Posterior vena cava (tissue), 2 donors: ENCODE measurements at regions of chr6 and their contacts with region 1.

Region 1: DNA sequence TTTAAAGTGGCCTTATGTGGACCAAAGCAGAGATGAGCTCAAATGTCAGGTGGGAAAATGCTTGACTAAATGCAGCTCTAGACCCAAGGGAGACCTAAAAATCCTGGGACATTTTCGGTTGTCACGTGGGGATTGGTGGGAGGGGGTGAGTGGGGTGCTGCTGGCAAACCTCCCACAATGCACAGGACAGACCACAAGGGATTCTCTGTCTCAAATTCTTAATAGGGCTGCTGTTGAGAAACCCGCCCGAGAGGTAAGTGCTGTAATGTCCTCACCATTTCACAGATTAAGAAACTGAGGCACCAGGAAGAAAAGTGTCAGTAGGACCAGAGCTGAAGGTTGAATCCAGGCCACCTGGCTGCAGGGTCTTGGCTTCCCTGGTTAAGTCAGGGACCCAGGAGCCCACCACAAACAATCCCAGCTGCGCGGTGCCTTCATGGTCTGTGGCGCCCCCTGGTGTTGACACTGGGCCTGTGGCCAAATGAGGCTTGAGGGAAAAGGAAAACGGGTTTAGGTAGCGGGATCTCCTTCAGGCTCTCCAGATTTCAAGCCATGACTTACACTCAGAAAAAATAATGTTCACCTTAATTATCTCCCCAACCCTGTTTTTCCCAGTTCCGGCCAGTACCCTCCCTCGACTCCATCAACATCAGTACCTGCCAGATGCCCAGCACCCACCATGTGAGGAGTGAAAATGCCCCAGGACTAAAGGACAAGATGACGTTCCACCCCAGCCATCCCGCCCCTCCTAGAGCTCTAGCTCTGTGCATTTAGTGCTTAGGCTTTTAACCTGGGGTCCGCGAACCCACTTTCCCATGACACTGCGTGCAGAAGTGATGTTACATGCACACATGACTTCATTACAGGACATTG is 7.2 kb downstream of the HLA-G start:
- DNase-seq: peak; percentile 44

Region 2: GRCh38 chr6:28929887-28930620 is 904.7 kb before region 1 on chr6:
- intact Hi-C with region 1: loop called in 1 of 2 experiments (anchors 5 kb)
- DNase-seq: no peak

Region 3: DNA sequence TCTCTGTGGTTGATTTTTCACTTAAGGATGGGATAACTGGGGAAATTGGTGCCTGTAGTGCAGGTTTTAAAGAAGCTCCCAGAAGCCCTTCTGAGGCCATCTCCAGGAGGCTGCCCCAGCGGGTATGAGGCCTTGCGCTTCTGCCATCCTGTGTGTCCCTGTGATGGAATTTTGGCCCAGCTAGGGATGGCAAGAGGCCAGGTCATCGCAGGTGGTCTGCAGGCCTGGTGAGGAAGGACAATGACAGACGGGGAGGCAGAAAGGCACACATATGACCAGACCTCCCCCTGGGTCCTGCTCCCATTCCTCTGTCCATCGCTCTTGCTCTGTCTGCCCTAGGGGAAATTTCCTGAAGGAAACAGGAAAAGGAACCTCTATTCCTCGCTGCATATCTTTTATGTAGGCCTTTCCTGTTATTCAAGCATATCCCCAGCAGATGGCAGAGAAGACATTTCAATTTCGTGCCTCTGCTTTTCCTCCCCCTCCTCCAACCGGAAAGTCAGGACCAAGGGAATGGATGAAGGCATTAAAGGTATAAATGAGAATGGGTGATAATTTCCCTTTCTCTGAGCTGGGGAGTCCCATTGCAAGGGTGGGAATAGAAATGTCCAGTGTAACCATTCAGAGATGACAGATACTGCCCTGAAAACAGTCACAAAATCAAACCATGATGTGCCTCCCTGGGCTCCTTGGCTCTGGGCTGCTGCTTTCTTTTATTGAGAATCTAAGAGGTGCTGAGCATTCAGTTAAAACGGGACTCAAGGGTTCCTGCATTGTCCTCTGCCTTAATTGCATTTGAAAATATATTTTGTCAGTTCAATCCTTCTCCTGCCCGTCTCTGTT is 129.2 kb before region 1 on chr6:
- intact Hi-C with region 1: loop called in 1 of 2 experiments (anchors 2 kb)
- DNase-seq: no peak

Region 4: DNA sequence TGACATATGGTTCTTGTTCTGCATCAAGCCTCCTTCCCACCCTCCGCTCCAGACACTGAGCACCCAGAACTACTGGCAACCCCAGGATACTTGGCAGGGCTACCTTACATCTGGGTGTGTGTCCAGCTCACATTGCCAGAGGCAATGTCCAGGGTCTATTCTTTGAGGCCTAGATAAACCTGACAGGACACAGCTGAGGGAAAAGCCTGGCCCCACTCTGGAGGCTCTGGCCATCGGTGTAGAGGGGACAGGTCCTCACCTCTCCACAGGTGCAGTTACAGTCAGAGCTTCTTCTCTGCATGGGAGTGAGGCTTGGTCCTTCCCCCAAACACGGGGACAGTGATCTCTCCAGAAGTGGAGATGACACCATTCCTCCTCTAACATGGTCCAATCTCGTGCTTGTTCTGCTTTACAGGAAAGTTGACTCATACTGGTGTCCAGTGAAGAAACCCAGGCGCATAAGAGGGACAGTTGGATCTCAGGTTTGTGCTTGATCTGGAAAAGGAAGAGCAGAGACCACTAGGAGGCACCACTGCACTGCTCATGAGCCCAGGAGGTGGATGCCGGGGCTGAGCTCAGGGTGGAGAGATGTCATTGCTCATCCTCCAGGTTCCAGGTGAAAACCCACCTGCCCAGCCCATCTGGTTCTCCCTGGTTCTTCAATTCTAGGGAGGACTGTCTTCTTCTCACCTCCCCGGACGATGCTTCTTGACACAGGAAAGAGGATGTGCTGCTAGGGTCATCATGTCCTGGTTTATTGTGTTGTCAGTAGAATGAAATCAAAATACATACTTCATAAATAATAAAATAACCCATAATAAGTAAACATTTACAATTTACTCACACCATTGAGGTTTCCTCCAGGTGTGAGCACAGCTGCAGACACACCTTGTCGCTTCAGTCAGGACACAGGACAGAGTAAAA is 96.8 kb before region 1 on chr6:
- intact Hi-C with region 1: loop called (anchors 5 to 10 kb)
- DNase-seq: no peak

Region 5: DNA sequence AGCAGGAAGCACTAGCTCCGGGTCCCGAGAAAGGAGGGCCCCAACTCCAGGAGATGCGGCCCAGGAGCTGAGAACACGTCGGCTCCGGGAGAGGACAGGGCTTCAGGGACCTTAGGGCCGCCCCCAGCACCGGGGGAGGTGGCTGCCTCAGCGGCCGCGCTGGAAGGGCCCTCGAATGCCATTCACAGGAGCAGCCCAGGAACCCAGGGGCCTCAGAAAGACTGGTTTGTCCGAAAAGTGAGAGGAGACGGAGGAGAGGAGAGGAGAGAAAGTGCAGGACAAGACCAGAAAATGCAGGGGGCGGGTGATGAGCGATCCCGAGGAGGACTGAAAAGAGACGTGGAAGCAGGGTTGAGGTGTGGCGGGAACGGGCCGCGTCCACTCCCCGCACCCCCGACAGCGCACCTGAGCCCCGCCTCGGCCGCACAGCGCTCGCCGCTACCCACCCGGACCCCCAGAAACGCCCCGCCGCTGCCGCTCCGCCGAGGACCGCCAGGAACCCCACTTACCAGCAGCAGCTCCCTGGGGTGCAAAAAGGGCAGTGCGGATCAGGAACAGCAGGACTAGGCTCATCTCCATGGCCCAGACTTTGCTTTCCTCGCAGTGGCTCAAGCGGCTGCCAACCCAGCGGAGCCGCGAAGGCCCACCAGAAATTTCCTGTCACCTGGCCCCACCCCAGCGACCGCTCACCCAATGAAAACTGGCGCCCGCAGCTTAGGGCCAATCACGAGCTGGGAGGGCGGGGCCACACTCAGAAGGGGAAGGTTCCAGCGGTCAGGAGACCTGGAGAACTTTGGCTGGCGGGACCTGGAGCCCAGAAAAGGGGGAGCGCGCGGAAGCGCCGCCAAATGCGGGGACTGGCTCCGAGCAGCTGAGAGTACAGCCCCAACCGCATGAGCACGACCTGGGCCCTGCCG is 86.2 kb before region 1 on chr6:
- intact Hi-C with region 1: loop called in 1 of 2 experiments (anchors 10 kb)
- DNase-seq: peak; percentile 96

Region 6: GRCh38 chr6:29875257-29875656 is 40.5 kb after region 1 on chr6:
- intact Hi-C with region 1: no loop called
- DNase-seq: no peak

Region 7: GRCh38 chr6:31834434-31835198 is 1999.8 kb after region 1 on chr6:
- intact Hi-C with region 1: no loop called
- DNase-seq: peak; percentile 95